OCI-LY7 (cell line): ENCODE measurements at regions of chr7 and their contacts with region 1.

Region 1: GRCh38 chr7:2172311-2173188 is 60.2 kb downstream of the MAD1L1 start:
- DNase-seq: no peak
- H3K4me3 ChIP-seq: no peak overlapping the region
- H3K27ac ChIP-seq: no peak overlapping the region
- H3K4me1 ChIP-seq: no peaks in the 10 kb centered on the region
- CTCF ChIP-seq: no peak

Region 2: DNA sequence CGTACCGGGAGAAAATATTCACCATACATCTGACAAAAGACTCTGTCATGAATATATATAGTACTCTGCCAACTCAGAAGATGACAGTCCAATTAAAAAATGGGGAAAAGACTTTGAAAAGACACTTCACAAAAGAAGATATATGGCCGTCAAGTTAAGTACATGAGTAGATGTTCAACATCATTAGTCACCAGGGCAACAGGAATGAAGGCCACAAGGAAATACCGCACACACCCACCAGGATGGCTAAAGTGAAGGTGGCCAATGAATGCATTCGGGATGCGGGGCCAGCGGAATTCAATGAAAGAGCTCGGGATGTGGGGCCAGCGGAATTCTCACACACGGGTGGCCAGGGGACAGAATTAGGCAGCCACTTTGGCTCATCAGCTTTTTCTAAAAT is 18.0 kb after region 1 on chr7:
- CTCF ChIA-PET with region 1: no interaction called
- POLR2A ChIA-PET with region 1: interaction called, 3 read pairs
- intact Hi-C with region 1: loop called (anchors 2 kb)
- DNase-seq: no peak
- H3K4me3 ChIP-seq: no peak overlapping the region
- H3K27ac ChIP-seq: no peak overlapping the region
- H3K4me1 ChIP-seq: no peaks in the 10 kb centered on the region
- CTCF ChIP-seq: no peak

Region 3: DNA sequence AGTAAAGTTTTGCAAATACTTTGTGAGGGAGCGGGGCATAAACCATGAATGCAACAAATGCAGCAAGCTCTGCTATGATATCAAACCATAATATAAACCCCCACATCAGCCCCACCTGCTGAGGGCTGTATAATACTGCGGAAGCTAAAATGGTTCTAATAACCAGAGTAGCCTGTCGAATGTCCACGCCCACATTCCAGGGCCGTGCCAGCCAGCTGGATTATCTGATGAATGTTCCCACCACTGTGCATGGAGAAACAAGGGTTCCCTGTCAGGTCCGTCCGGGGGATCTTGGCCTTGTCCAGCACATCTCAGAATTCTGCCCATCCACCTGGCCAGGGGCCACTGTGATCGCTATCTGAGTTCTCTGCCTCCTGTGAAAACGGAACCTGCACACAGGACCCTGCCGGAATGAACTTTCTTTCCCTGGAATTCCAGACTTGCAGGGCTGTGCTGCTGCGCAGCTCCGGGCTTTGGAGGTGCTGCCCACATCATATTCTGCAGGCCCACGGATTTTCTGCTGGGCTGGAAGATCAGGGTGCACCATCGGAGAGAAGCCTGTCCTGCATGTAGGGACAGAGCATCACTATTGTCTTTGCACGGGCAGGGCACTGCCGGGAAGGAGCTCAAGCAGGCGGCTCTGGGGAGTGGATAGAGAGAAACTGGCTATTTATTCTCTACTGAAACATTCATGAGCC is 748.6 kb after region 1 on chr7:
- CTCF ChIA-PET with region 1: no interaction called
- POLR2A ChIA-PET with region 1: no interaction called
- intact Hi-C with region 1: no loop called
- DNase-seq: no peak
- H3K4me3 ChIP-seq: no peak overlapping the region
- H3K27ac ChIP-seq: no peak overlapping the region
- H3K4me1 ChIP-seq: no peaks in the 10 kb centered on the region
- CTCF ChIP-seq: no peak